Astrocyte of the cerebellum (primary cell): ENCODE measurements at regions of chr3 and their contacts with region 1.

Region 1: GRCh38 chr3:123719862-123720453 is 135.1 kb upstream of the HACD2 start:
- DNase-seq: no peak
- H3K4me3 ChIP-seq: no peak overlapping the region
- CTCF ChIP-seq: no peak

Region 2: DNA sequence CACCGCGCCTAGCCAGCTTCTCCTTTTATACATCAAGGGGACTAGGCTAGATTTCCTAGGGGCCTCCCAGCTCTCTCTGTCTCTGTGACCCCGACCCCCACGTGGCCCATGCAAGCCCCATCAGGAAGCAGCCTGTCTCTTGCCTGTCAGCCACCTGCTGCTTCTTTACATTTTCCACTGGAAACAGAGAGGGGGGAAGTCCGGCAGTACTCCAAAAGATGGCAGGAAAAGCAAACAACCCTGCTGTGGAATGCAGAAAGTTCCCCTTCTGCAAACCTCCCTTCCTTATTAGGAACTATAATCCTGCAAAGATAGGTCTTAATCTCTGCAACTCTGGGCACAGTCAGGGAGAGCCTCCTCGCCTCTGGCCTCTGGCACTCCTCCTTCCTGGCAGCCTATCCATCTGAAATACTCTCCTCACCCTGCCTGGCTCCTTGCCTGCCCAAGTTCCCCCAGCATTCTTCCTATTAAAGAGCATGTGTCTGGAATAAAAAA is 87.8 kb before region 1 on chr3:
- in situ Hi-C with region 1: no loop called
- DNase-seq: peak; percentile 33
- H3K4me3 ChIP-seq: no peak overlapping the region
- CTCF ChIP-seq: no peak

Region 3: DNA sequence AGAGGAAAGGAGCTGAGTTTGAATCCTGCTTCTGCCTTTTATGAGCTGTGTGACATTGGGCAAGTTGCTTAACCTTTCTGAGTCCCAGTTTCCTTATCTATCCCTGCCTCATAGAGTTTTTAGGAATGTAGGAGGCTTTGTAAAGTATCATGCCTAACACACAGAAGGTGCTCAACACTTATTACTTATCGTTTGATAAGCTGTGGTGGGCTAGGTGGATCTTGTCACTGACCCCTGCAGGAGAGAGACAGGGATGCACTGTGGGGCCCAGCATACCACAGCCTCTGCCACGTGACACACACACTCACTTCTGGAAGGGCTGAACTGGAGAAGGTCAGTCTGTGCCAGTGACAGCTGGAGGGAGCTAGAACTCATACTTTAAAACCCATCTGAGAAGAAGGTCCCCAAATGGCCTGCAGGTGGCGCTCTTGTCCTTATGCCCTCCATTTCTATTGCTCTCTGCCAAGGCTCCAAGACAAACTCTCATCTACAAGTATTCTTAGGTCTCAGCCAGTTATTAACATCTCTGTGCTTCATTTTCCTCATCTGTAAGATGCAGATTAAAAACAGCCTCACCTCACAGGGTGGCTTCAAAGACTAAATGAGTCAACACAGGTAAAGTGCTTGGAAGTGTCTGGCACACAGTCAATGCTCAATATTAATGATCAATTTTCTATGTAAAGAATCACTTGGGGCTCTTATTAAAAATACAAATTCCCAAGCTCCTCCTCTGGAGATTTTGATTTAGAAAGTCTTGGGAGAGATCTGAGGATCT is 77.6 kb before region 1 on chr3:
- in situ Hi-C with region 1: no loop called
- DNase-seq: peak; percentile 76
- H3K4me3 ChIP-seq: no peak overlapping the region
- CTCF ChIP-seq: peak; percentile 84

Region 4: GRCh38 chr3:123652346-123652984 is 67.5 kb before region 1 on chr3:
- in situ Hi-C with region 1: loop called (anchors 10 kb)
- DNase-seq: no peak
- H3K4me3 ChIP-seq: no peak overlapping the region
- CTCF ChIP-seq: peak; percentile 88